HEK293 (cell line): ENCODE measurements at regions of chr18 and their contacts with region 1.

Region 1: DNA sequence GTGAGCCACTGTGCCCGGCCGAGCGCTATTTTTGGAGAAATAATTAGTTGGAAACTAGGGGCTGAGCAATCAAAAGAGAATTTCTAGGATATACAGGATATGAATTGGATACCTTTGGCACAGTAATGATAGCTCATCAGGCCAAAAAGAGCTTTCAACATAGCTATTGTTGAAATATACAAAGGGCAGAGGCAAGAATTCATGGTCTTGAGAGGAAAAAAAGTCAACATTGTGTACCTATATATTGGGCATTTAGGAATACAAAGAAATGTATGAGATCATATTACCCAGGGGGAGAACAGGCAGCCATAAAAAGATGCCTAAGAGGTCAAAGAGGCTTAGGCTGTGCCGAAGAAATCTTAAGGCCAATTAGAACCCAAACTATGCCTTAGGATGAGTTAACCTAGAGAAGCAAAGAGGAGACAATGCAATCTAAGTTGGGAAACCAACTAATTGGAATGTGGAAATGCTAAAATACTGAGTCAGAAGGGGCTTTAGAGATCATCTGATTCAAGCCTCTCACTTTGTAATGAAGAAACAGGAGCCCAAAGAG is 99.0 kb downstream of the RBBP8 start:
- H3K4me3 ChIP-seq: no peak overlapping the region
- H3K27ac ChIP-seq: no peak overlapping the region
- H3K4me1 ChIP-seq: no peaks in the 10 kb centered on the region
- CTCF ChIP-seq: no peak

Region 2: GRCh38 chr18:23416298-23416697 is 384.2 kb after region 1 on chr18:
- CTCF ChIA-PET with region 1: interaction called, 15 read pairs
- POLR2A ChIA-PET with region 1: no interaction called
- H3K4me3 ChIP-seq: no peak overlapping the region
- H3K27ac ChIP-seq: no peak overlapping the region
- H3K4me1 ChIP-seq: no peaks in the 10 kb centered on the region
- CTCF ChIP-seq: no peak